Heart right ventricle (tissue), 16 donors: ENCODE measurements at regions of chr17 and their contacts with region 1.

Region 1: GRCh38 chr17:19013806-19014627 is 9.5 kb upstream of the FAM83G start:
- DNase-seq: no peak
- ATAC-seq: no peak
- H3K4me3 ChIP-seq: no peak overlapping the region
- H3K27ac ChIP-seq: no peak overlapping the region
- H3K4me1 ChIP-seq: no peaks in the 10 kb centered on the region
- H3K27me3 ChIP-seq: peaks cover 0 to 8% (median 0%) of the 10 kb centered on the region in 7 donors
- CTCF ChIP-seq: no peak

Region 2: GRCh38 chr17:18974407-18975132 is 39.4 kb before region 1 on chr17:
- intact Hi-C with region 1: loop called in 1 of 10 experiments (anchors 2 kb)
- DNase-seq: no peak
- ATAC-seq: no peak
- H3K4me3 ChIP-seq: no peak overlapping the region
- H3K27ac ChIP-seq: no peak overlapping the region
- H3K4me1 ChIP-seq: no peaks in the 10 kb centered on the region
- H3K27me3 ChIP-seq: no peaks in the 10 kb centered on the region
- CTCF ChIP-seq: no peak